Left cardiac atrium (tissue), 4 donors: ENCODE measurements at regions of chr11 and their contacts with region 1.

Region 1: GRCh38 chr11:7571640-7572000 is 57.8 kb downstream of the PPFIBP2 start:
- DNase-seq: peak; percentile 62
- ATAC-seq: peak; percentile 61 to 67

Region 2: GRCh38 chr11:7657306-7658025 is 85.8 kb after region 1 on chr11:
- intact Hi-C with region 1: loop called (anchors 5 kb)
- DNase-seq: peak; percentile 68
- ATAC-seq: peak; percentile 89 to 95

Region 3: GRCh38 chr11:7665473-7666291 is 94.1 kb after region 1 on chr11:
- intact Hi-C with region 1: loop called in 1 of 2 experiments (anchors 5 kb)
- DNase-seq: peak; percentile 80
- ATAC-seq: peak; percentile 95 to 97